ENCODE measurements at regions of chr2 and their contacts with region 1.

Region 1: DNA sequence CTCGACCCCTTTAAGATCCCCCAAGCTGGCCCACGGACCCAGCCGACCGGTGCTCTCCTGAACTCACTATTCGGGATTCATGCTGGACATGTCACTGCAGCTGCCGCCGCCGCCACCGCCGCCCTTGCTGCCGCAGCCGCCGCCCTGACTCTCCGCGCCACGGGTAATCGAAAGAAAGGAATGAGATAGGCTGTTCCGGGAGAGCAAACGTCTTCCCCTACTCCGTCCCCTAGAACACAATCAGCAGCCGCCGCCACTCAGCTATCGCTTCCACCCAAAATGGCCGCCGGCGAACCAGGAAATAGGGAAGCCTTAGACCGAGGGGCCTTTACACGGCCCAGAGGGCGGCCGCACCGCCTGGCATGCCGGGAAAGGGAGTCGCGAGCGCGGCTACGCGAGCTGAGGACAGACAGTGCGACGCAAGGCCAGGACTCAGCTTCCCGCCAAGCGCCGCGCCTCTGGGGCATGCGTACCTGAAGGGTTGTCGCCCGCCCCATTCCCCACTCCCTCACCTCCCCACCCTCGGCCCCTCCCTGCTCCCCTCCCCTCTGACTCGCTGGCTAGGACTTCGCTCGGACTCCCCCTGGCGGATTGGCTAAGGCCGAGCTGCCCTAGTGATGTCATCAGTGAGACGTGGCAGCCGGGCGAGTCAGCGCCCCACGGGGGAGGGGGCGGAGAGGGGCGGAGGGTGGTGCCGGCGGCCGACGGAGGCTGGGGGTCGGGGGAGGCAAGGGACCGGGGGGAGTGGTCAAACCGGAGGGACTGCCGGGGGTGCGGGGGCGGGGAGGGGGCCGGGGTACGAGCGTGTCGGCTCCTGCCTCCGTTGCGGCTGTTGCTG is at the start of gene RAB1A:
- DNase-seq: peak; percentile 100
- ATAC-seq: peak; percentile 99
- H3K4me3 ChIP-seq: peak within 1 kb of the TSS; percentile 75 to 96
- H3K27ac ChIP-seq: peak within 1 kb of the TSS; percentile 88 to 95
- H3K4me1 ChIP-seq: peaks cover 0 to 2% of the 10 kb centered on the region in 2 donors
- H3K27me3 ChIP-seq: no peaks in the 10 kb centered on the region
- total RNA-seq, gene RAB1A: 135 to 165 TPM

Region 2: GRCh38 chr2:65070172-65070830 is 59.7 kb before region 1 on chr2:
- intact Hi-C with region 1: loop called in 1 of 2 experiments (anchors 10 kb)
- DNase-seq: no peak
- ATAC-seq: peak; percentile 9
- H3K4me3 ChIP-seq: no peak overlapping the region
- H3K27ac ChIP-seq: peak overlapping the region in 1 of 2 donors; percentile 2
- H3K4me1 ChIP-seq: no peaks in the 10 kb centered on the region
- H3K27me3 ChIP-seq: no peaks in the 10 kb centered on the region

Region 3: DNA sequence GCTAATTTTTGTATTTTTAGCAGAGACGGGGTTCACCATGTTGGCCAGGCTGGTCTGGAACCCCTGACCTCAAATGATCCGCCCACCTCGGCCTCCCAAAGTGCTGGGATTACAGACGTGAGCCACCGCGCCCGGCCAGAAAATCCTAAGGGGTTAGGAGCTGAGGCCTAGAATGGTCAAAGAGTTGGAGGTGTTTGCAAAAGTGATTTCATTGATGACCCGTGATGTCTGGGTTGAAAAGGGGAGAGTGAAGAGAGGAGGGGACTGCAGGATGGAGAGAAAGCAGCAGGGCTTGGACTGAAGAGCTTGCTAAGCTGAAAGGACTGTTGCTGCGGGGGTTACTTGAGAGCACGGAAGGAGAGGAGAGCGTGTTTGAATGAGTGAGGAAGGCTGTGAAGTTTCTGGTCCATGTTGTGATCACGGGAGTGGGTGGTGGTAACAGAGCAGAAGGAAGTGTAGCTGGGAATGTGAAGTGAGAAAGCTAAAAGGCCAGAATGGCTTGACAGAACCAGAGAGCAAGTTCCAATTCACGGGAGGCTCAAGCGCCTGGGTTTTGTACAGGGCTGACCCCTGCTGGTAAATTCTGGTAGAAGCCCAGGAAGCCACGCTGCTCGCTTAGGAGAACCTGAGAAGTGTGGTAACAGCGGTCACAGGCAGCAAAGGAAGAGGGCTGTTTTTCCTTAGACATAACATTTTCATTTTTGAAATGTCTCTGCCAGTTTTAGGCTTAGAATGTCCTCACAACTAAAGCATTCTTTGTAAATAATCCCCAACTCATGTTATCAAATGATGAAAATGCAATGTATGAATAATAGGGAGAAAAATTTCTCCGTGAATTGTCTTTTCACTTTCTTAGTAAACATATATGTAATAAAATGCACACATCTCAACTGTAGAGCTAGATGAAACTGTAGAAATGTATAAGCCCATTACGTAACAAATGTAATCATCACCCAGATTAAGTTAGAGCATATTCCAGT is 57.1 kb after region 1 on chr2:
- intact Hi-C with region 1: loop called in 1 of 2 experiments (anchors 10 kb)
- DNase-seq: peak; percentile 85 to 86
- ATAC-seq: peak; percentile 88
- H3K4me3 ChIP-seq: no peak overlapping the region
- H3K27ac ChIP-seq: no peak overlapping the region
- H3K4me1 ChIP-seq: no peaks in the 10 kb centered on the region
- H3K27me3 ChIP-seq: no peaks in the 10 kb centered on the region

Region 4: GRCh38 chr2:65227425-65228262 is 97.6 kb after region 1 on chr2 and contains the start of gene ACTR2:
- intact Hi-C with region 1: loop called in 1 of 2 experiments (anchors 5 kb)
- DNase-seq: peak; percentile 98
- ATAC-seq: peak; percentile 99
- H3K4me3 ChIP-seq: peak within 1 kb of the TSS; percentile 90 to 92
- H3K27ac ChIP-seq: peak within 1 kb of the TSS; percentile 86 to 96
- H3K4me1 ChIP-seq: peaks cover 0 to 13% of the 10 kb centered on the region in 2 donors
- H3K27me3 ChIP-seq: no peaks in the 10 kb centered on the region
- total RNA-seq, gene ACTR2: 221 to 255 TPM

Region 5: GRCh38 chr2:65264821-65265670 is 135.0 kb after region 1 on chr2:
- intact Hi-C with region 1: no loop called
- DNase-seq: no peak
- ATAC-seq: peak; percentile 68
- H3K4me3 ChIP-seq: no peak overlapping the region
- H3K27ac ChIP-seq: no peak overlapping the region
- H3K4me1 ChIP-seq: no peaks in the 10 kb centered on the region
- H3K27me3 ChIP-seq: no peaks in the 10 kb centered on the region

Region 6: GRCh38 chr2:65432227-65433190 is 302.5 kb after region 1 on chr2 and contains the start of gene SPRED2:
- intact Hi-C with region 1: no loop called
- DNase-seq: peak; percentile 96 to 97
- ATAC-seq: peak; percentile 86
- H3K4me3 ChIP-seq: peak within 1 kb of the TSS; percentile 32 to 88
- H3K27ac ChIP-seq: peak within 1 kb of the TSS; percentile 34 to 89
- H3K4me1 ChIP-seq: no peaks in the 10 kb centered on the region
- H3K27me3 ChIP-seq: no peaks in the 10 kb centered on the region
- total RNA-seq, gene SPRED2: 36.5 to 38.3 TPM